ENCODE measurements at regions of chr1 and their contacts with region 1.

Region 1: DNA sequence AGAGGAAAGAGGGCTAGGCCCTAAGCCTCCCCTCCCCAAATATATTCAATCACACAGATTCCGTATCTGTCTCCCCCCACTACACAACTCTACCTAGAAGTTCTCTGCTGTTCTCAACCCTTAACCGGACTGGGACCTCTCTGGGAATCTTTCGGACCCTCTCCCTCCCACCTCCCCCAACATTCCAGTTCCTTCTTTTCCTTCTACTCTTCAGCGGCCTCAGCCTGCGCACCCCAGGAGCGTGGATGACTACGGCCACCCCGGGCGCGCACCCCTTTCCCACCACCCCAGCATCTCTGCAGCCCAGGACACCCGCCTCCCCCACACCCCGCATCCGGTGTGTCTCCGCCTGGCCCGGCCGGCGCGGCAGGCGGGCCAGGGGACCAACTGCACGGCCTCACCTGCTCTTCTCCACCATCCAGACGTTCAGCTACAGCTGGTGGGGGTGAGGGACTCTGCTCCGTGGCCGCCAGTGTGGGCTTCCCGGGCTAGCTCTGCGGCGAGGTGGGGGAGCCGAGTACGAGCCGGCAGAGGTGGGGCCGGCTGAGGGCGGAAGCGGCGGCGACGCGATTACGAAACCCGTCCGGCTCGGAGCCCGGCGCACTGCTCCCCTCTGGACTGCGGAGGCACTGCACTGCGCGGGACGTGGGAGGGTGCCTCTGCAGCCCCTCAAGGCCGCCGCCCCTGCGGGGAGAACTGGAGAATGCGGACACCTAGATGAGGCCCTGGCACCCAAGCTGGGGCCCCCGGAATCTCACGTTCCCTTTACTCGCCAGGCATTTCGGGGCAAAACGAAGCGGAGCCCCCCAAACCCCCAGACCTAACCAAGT is at the start of gene CDC42SE1:
- DNase-seq: peak; percentile 76 to 85 (median 82)
- ATAC-seq: peak; percentile 84
- H3K4me3 ChIP-seq: peak within 1 kb of the TSS; percentile 82
- H3K4me3 Mint-ChIP-seq: peak within 1 kb of the TSS; percentile 95 to 100 (median 99)
- H3K27ac ChIP-seq: peak within 1 kb of the TSS; percentile 99
- H3K27ac Mint-ChIP-seq: peak within 1 kb of the TSS; percentile 93 to 99 (median 95)
- H3K4me1 ChIP-seq: peaks cover 11 to 26% of the 10 kb centered on the region in 2 donors
- H3K4me1 Mint-ChIP-seq: peaks cover 35 to 55% (median 41%) of the 10 kb centered on the region in 7 donors
- H3K27me3 ChIP-seq: no peaks in the 10 kb centered on the region
- H3K27me3 Mint-ChIP-seq: no peaks in the 10 kb centered on the region
- total RNA-seq, gene CDC42SE1: 362 to 516 (median 425) TPM

Region 2: DNA sequence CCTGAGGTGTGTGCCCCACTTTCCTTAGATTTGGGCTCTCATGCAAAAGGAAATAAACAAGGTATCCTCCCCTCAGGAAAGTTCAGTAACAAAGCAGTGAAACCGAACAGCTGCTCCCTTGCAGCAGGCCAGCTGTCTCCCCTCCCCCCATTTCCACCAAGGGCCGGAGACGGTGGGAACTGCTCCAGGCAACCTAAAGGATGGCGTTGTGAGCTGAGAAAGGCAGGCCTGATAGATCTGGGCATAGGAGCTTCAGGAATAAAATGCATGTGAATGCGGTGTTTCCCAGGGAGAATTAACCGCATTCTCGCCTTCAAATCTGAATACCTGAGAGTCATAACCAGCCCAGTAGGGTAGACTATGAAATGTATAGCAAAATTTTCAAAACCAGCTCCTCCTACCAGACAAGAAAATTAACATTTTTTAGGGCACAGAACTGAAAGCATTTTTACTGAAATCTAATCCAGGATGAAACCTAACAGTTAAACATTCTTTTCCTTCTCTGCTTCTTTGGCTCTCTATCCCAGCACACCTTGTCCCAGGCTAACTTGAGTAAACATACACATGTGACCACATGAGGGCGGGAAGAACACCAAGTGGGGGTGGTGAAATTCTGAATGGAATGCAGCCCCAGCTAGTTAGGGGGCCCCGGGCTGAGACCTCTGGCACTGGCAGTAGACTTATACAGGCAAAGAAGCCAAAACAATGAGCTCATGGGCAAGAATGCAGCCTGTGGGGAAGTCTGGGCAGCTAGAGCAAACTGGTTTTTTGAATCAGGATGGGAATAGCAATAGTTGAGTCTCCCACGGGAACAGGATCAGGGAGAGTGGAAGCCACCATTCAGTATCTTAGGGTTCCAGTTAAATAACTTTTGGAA is 491.3 kb before region 1 on chr1:
- CTCF ChIA-PET with region 1: no interaction called
- POLR2A ChIA-PET with region 1: interaction called, 3 read pairs
- intact Hi-C with region 1: loop called (anchors 5 kb)
- DNase-seq: peak in 5 of 9 donors; percentile 49 to 70 (median 62)
- ATAC-seq: peak; percentile 5
- H3K4me3 ChIP-seq: peak overlapping the region; percentile 73
- H3K4me3 Mint-ChIP-seq: peak overlapping the region; percentile 84 to 95 (median 90)
- H3K27ac ChIP-seq: peak overlapping the region; percentile 97
- H3K27ac Mint-ChIP-seq: peak overlapping the region; percentile 96 to 100 (median 97)
- H3K4me1 ChIP-seq: peaks cover 92 to 96% of the 10 kb centered on the region in 2 donors
- H3K4me1 Mint-ChIP-seq: peaks cover 41 to 95% (median 85%) of the 10 kb centered on the region in 7 donors
- H3K27me3 ChIP-seq: no peaks in the 10 kb centered on the region
- H3K27me3 Mint-ChIP-seq: no peaks in the 10 kb centered on the region

Region 3: GRCh38 chr1:150836129-150836773 is 223.0 kb before region 1 on chr1:
- CTCF ChIA-PET with region 1: no interaction called
- POLR2A ChIA-PET with region 1: no interaction called
- intact Hi-C with region 1: no loop called
- DNase-seq: no peak
- ATAC-seq: no peak
- H3K4me3 ChIP-seq: no peak overlapping the region
- H3K4me3 Mint-ChIP-seq: no peak overlapping the region
- H3K27ac ChIP-seq: no peak overlapping the region
- H3K27ac Mint-ChIP-seq: peak overlapping the region in 1 of 9 donors; percentile 39
- H3K4me1 ChIP-seq: peaks cover 0 to 13% of the 10 kb centered on the region in 2 donors
- H3K4me1 Mint-ChIP-seq: peaks cover 10 to 32% (median 23%) of the 10 kb centered on the region in 7 donors
- H3K27me3 ChIP-seq: no peaks in the 10 kb centered on the region
- H3K27me3 Mint-ChIP-seq: no peaks in the 10 kb centered on the region

Region 4: GRCh38 chr1:151032164-151032563 is 27.1 kb before region 1 on chr1:
- CTCF ChIA-PET with region 1: interaction called, 74 read pairs
- POLR2A ChIA-PET with region 1: interaction called, 50 read pairs
- intact Hi-C with region 1: no loop called
- DNase-seq: no peak
- ATAC-seq: no peak
- H3K4me3 ChIP-seq: no peak overlapping the region
- H3K4me3 Mint-ChIP-seq: no peak overlapping the region
- H3K27ac ChIP-seq: no peak overlapping the region
- H3K27ac Mint-ChIP-seq: peak overlapping the region in 1 of 9 donors; percentile 33
- H3K4me1 ChIP-seq: no peaks in the 10 kb centered on the region
- H3K4me1 Mint-ChIP-seq: peaks cover 5 to 31% (median 12%) of the 10 kb centered on the region in 7 donors
- H3K27me3 ChIP-seq: no peaks in the 10 kb centered on the region
- H3K27me3 Mint-ChIP-seq: no peaks in the 10 kb centered on the region

Region 5: DNA sequence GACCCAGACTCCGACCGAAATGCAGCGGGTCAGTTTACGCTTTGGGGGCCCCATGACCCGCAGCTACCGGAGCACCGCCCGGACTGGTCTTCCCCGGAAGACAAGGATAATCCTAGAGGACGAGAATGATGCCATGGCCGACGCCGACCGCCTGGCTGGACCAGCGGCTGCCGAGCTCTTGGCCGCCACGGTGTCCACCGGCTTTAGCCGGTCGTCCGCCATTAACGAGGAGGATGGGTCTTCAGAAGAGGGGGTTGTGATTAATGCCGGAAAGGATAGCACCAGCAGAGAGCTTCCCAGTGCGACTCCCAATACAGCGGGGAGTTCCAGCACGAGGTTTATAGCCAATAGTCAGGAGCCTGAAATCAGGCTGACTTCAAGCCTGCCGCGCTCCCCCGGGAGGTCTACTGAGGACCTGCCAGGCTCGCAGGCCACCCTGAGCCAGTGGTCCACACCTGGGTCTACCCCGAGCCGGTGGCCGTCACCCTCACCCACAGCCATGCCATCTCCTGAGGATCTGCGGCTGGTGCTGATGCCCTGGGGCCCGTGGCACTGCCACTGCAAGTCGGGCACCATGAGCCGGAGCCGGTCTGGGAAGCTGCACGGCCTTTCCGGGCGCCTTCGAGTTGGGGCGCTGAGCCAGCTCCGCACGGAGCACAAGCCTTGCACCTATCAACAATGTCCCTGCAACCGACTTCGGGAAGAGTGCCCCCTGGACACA is 11.2 kb before region 1 on chr1:
- CTCF ChIA-PET with region 1: interaction called, 38 read pairs
- POLR2A ChIA-PET with region 1: interaction called, 253 read pairs
- intact Hi-C with region 1: loop called (anchors 1 kb)
- DNase-seq: peak; percentile 43 to 64 (median 55)
- ATAC-seq: peak; percentile 86
- H3K4me3 ChIP-seq: peak overlapping the region; percentile 73
- H3K4me3 Mint-ChIP-seq: peak overlapping the region; percentile 85 to 91 (median 90)
- H3K27ac ChIP-seq: peak overlapping the region; percentile 81
- H3K27ac Mint-ChIP-seq: peak overlapping the region; percentile 66 to 96 (median 93)
- H3K4me1 ChIP-seq: peaks cover 15 to 37% of the 10 kb centered on the region in 2 donors
- H3K4me1 Mint-ChIP-seq: peaks cover 37 to 89% (median 71%) of the 10 kb centered on the region in 7 donors
- H3K27me3 ChIP-seq: no peaks in the 10 kb centered on the region
- H3K27me3 Mint-ChIP-seq: no peaks in the 10 kb centered on the region